ENCODE measurements at regions of chr17 and their contacts with region 1.

Region 1: DNA sequence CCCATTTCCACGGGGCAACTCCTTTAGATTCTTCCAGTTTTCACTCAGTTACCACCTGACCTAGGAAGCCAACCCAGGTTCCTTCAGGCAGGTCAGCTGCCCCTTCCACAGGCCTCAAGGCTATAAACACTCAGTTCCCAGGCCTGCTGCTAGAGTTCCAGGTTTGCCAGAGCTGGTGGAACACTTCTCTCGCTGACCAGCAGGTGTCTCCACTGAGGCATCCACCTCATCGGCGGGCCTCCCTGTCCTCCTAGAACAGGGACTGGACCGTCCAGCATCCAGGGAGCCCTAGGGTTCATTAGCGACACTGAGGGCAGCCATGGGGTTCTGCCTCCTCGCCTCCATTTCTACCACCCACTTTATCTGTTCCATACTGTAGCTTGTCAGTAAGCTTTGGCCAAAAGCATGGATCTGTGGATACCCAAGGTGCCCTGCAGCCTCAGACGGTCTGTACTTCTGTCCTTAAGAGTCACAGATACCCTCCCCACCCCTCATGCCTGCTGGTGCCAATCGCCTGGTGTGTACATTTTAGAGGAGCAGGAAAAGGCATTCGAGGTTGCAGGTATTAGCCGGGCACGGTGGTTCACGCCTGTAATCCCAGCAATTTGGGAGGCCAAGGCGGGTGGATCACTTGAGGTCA is 29.0 kb downstream of the PIMREG start:
- DNase-seq: peak; percentile 44 to 76 (median 65)
- ATAC-seq: peak; percentile 62
- H3K4me3 ChIP-seq: no peak overlapping the region
- H3K4me3 Mint-ChIP-seq: no peak overlapping the region
- H3K27ac ChIP-seq: no peak overlapping the region
- H3K27ac Mint-ChIP-seq: no peak overlapping the region
- H3K4me1 ChIP-seq: no peaks in the 10 kb centered on the region
- H3K4me1 Mint-ChIP-seq: peaks cover 1% of the 10 kb centered on the region
- H3K27me3 ChIP-seq: no peaks in the 10 kb centered on the region
- H3K27me3 Mint-ChIP-seq: no peaks in the 10 kb centered on the region
- CTCF ChIP-seq: peak; percentile 93

Region 2: GRCh38 chr17:6435968-6436367 is 37.3 kb before region 1 on chr17:
- CTCF ChIA-PET with region 1: interaction called, 11 read pairs
- POLR2A ChIA-PET with region 1: no interaction called
- intact Hi-C with region 1: no loop called
- DNase-seq: peak; percentile 25 to 75 (median 60)
- ATAC-seq: peak; percentile 93
- H3K4me3 ChIP-seq: no peak overlapping the region
- H3K4me3 Mint-ChIP-seq: no peak overlapping the region
- H3K27ac ChIP-seq: no peak overlapping the region
- H3K27ac Mint-ChIP-seq: no peak overlapping the region
- H3K4me1 ChIP-seq: no peaks in the 10 kb centered on the region
- H3K4me1 Mint-ChIP-seq: peaks cover 2% of the 10 kb centered on the region
- H3K27me3 ChIP-seq: no peaks in the 10 kb centered on the region
- H3K27me3 Mint-ChIP-seq: peaks cover 28% of the 10 kb centered on the region
- CTCF ChIP-seq: peak; percentile 77

Region 3: GRCh38 chr17:6458416-6458950 is 14.8 kb before region 1 on chr17:
- CTCF ChIA-PET with region 1: interaction called, 10 read pairs
- POLR2A ChIA-PET with region 1: no interaction called
- intact Hi-C with region 1: no loop called
- DNase-seq: no peak
- ATAC-seq: no peak
- H3K4me3 ChIP-seq: no peak overlapping the region
- H3K4me3 Mint-ChIP-seq: no peak overlapping the region
- H3K27ac ChIP-seq: no peak overlapping the region
- H3K27ac Mint-ChIP-seq: no peak overlapping the region
- H3K4me1 ChIP-seq: peaks cover 5% of the 10 kb centered on the region
- H3K4me1 Mint-ChIP-seq: peaks cover 9% of the 10 kb centered on the region
- H3K27me3 ChIP-seq: peaks cover 0 to 3% of the 10 kb centered on the region in 2 experiments
- H3K27me3 Mint-ChIP-seq: no peaks in the 10 kb centered on the region
- CTCF ChIP-seq: no peak

Region 4: DNA sequence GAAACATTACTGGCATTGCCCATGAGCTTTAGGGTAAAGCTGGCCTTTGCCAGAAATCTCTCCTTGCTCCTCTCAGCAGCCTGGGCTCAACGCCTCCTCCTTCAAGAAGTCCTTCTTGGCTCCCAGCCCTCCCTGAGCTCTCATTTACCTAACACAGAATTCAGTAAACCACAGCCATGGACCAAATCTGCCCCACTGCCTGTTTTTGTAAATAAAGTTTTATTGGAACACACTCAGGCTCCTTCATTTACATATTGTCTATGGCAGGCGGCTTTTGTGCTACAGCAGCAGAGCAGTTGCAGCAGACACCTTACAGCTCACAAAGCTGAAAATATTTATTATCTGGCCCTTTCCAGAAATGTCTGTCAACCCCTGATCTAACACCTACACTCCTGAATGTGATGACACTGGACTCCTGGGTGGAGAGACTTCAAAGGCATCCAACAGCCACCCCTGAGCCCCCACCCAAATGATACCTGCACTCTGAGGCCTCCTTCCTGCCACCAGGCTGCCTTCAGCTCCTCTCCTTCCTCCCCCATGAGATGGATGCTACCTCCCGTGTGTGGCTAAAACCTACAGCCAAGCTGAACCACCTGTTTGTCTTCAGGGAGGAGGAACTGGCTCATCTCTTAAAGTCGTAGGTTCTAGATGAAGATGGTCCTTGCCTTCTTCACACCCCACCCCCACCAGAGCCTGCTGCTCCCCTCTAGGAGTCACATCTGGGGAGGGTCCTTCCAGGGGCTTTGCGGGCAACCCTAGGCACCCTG is 12.6 kb after region 1 on chr17:
- CTCF ChIA-PET with region 1: interaction called, 17 read pairs
- POLR2A ChIA-PET with region 1: no interaction called
- intact Hi-C with region 1: no loop called
- DNase-seq: no peak
- ATAC-seq: no peak
- H3K4me3 ChIP-seq: no peak overlapping the region
- H3K4me3 Mint-ChIP-seq: no peak overlapping the region
- H3K27ac ChIP-seq: no peak overlapping the region
- H3K27ac Mint-ChIP-seq: no peak overlapping the region
- H3K4me1 ChIP-seq: no peaks in the 10 kb centered on the region
- H3K4me1 Mint-ChIP-seq: no peaks in the 10 kb centered on the region
- H3K27me3 ChIP-seq: peaks cover 0 to 4% of the 10 kb centered on the region in 2 experiments
- H3K27me3 Mint-ChIP-seq: peaks cover 5% of the 10 kb centered on the region
- CTCF ChIP-seq: no peak

Region 5: GRCh38 chr17:6651357-6651918 is 178.2 kb after region 1 on chr17 and contains the starts of genes C17orf100 and MED31:
- CTCF ChIA-PET with region 1: interaction called, 3 read pairs
- POLR2A ChIA-PET with region 1: no interaction called
- intact Hi-C with region 1: loop called in 1 of 2 experiments (anchors 5 kb)
- DNase-seq: peak; percentile 90 to 97 (median 94)
- ATAC-seq: peak; percentile 88
- H3K4me3 ChIP-seq: peak within 1 kb of the TSS; percentile 84 to 86
- H3K4me3 Mint-ChIP-seq: peak within 1 kb of the TSS; percentile 97
- H3K27ac ChIP-seq: peak within 1 kb of the TSS; percentile 99 to 100
- H3K27ac Mint-ChIP-seq: peak within 1 kb of the TSS; percentile 100
- H3K4me1 ChIP-seq: peaks cover 23% of the 10 kb centered on the region
- H3K4me1 Mint-ChIP-seq: peaks cover 69% of the 10 kb centered on the region
- H3K27me3 ChIP-seq: no peaks in the 10 kb centered on the region
- H3K27me3 Mint-ChIP-seq: no peaks in the 10 kb centered on the region
- CTCF ChIP-seq: no peak
- total RNA-seq, gene C17orf100: 0.39 to 0.73 TPM
- total RNA-seq, gene MED31: 21.4 to 25.6 TPM

Region 6: DNA sequence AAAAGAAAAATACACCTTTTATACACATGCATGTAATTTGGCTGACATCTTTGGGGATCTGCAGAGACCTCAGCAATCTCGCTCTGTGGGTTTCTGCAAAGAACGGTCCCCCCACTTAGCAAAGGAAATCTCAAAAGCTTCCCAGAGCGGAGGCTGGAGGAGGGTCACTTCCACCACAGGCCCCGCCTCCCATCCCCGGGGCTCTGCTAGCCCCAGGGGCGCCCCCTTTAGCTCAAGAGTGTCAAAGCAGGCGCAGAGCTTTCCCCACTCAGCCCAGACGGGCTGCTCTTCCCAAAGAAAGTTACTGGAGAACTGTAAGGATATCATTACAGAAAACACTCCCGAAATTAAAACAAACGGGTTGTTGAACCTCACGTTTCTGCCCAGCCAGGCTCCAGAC is 228.5 kb after region 1 on chr17:
- CTCF ChIA-PET with region 1: interaction called, 9 read pairs
- POLR2A ChIA-PET with region 1: no interaction called
- intact Hi-C with region 1: loop called in 1 of 2 experiments (anchors 10 kb)
- DNase-seq: peak in 5 of 9 experiments; percentile 16 to 52 (median 34)
- ATAC-seq: peak; percentile 55
- H3K4me3 ChIP-seq: no peak overlapping the region
- H3K4me3 Mint-ChIP-seq: no peak overlapping the region
- H3K27ac ChIP-seq: no peak overlapping the region
- H3K27ac Mint-ChIP-seq: no peak overlapping the region
- H3K4me1 ChIP-seq: no peaks in the 10 kb centered on the region
- H3K4me1 Mint-ChIP-seq: peaks cover 4% of the 10 kb centered on the region
- H3K27me3 ChIP-seq: no peaks in the 10 kb centered on the region
- H3K27me3 Mint-ChIP-seq: peaks cover 15% of the 10 kb centered on the region
- CTCF ChIP-seq: peak; percentile 25

Region 7: DNA sequence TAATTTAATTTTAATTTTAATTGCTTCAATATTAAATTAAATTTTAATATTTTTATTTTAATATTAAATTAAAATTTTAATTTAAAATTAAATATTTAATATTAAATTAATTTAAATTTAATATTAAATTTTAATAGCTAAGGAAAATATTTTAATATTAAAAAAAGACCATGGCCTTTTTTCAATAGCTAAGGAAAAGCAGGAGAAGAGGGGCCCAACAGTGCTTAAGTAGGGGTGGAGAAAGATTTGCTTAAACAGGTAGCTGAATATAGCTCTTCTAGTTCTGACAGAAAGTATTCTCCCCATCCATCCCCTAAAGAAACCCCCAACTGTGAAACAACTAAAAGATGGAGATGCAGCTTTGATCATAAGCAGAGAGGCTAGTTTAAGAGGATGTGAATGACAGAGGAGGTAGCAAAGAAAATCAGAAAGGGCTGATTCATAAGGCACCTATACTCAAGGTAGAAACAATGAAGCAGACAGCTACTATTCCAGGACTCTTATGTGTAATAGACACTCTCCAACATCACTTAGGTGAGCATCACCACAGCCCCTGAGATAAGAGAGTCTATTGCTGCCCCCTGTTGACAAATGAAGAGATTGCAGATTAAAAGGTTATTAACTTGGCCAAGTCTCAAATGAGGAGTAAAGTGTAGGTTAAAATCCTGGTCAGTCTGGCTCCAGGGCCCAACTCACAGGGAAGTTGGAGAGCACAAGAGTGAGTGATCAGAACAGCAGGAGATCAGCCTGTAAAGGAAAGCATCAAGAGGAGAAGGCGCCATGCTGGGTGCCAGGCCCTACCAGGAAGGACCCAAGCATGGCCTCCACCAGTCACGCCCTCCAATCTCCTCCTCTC is 531.4 kb after region 1 on chr17:
- CTCF ChIA-PET with region 1: no interaction called
- POLR2A ChIA-PET with region 1: no interaction called
- intact Hi-C with region 1: loop called in 1 of 2 experiments (anchors 10 kb)
- DNase-seq: peak in 3 of 9 experiments; percentile 47 to 85 (median 77)
- ATAC-seq: peak; percentile 98
- H3K4me3 ChIP-seq: no peak overlapping the region
- H3K4me3 Mint-ChIP-seq: no peak overlapping the region
- H3K27ac ChIP-seq: no peak overlapping the region
- H3K27ac Mint-ChIP-seq: no peak overlapping the region
- H3K4me1 ChIP-seq: no peaks in the 10 kb centered on the region
- H3K4me1 Mint-ChIP-seq: peaks cover 23% of the 10 kb centered on the region
- H3K27me3 ChIP-seq: no peaks in the 10 kb centered on the region
- H3K27me3 Mint-ChIP-seq: no peaks in the 10 kb centered on the region
- CTCF ChIP-seq: peak; percentile 78

Measured in CD8-positive, alpha-beta T cell (primary cell).